Aorta (tissue), 5 donors: ENCODE measurements at regions of chr5 and their contacts with region 1.

Region 1: DNA sequence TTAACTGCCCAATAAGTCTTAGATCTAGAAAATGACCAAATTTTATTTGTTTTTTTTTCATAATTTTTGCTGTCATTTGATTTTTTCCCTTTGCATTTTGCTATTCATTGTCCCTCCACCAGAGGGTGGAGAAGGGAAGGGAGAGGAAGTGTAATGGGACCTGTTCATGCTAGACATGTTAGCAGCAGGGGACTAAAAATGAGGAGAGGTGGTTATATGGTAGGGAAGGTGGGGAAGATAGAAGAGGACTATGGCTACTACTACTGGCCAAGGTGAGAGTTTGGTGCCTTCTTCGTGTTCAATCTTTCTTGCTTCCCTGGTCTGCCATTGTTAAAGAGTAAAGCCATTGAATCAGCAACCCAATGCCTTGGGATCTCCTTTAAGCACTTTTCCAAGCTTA is 6.4 kb downstream of the GRIA1 start:
- DNase-seq: no peak
- ATAC-seq: no peak
- H3K4me3 ChIP-seq: no peak overlapping the region
- H3K27ac ChIP-seq: peak overlapping the region in 1 of 2 donors; percentile 28
- H3K4me1 ChIP-seq: no peaks in the 10 kb centered on the region
- H3K27me3 ChIP-seq: no peaks in the 10 kb centered on the region

Region 2: GRCh38 chr5:153629027-153629895 is 132.4 kb after region 1 on chr5:
- intact Hi-C with region 1: loop called (anchors 10 kb)
- DNase-seq: peak; percentile 82 to 85
- ATAC-seq: peak; percentile 82
- H3K4me3 ChIP-seq: no peak overlapping the region
- H3K27ac ChIP-seq: peak overlapping the region in 1 of 2 donors; percentile 78
- H3K4me1 ChIP-seq: peaks cover 0 to 9% of the 10 kb centered on the region in 2 donors
- H3K27me3 ChIP-seq: no peaks in the 10 kb centered on the region